Prostate gland (tissue), 2 donors: ENCODE measurements at regions of chr18 and their contacts with region 1.

Region 1: GRCh38 chr18:13289481-13290205 is 71.1 kb downstream of the LDLRAD4 start:
- DNase-seq: no peak
- H3K4me3 ChIP-seq: no peak overlapping the region
- H3K27ac ChIP-seq: no peak overlapping the region
- H3K4me1 ChIP-seq: peaks cover 6% of the 10 kb centered on the region
- H3K27me3 ChIP-seq: no peaks in the 10 kb centered on the region
- CTCF ChIP-seq: no peak
- POLR2A ChIP-seq: no peak

Region 2: DNA sequence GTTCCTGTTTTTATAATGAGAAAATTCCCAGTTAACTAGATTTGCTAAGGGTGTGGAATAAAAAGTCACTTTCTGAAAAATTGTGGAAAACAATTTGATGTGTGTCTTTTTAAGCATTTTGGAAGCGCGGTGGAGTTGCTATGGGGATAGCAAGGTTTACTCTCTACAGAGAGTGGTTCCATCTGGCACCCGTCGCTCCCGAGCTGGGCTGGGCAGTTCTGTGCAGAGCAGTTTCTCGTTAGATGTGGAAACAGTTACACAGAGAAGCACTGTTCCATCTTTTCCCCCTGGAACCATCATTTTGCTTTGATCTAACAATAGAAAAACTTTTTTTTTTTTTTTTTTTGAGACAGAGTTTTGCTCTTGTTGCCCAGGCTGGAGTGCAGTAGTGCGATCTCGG is 53.7 kb before region 1 on chr18:
- intact Hi-C with region 1: loop called (anchors 10 kb)
- DNase-seq: no peak
- H3K4me3 ChIP-seq: no peak overlapping the region
- H3K27ac ChIP-seq: no peak overlapping the region
- H3K4me1 ChIP-seq: no peaks in the 10 kb centered on the region
- H3K27me3 ChIP-seq: no peaks in the 10 kb centered on the region
- CTCF ChIP-seq: no peak
- POLR2A ChIP-seq: no peak

Region 3: DNA sequence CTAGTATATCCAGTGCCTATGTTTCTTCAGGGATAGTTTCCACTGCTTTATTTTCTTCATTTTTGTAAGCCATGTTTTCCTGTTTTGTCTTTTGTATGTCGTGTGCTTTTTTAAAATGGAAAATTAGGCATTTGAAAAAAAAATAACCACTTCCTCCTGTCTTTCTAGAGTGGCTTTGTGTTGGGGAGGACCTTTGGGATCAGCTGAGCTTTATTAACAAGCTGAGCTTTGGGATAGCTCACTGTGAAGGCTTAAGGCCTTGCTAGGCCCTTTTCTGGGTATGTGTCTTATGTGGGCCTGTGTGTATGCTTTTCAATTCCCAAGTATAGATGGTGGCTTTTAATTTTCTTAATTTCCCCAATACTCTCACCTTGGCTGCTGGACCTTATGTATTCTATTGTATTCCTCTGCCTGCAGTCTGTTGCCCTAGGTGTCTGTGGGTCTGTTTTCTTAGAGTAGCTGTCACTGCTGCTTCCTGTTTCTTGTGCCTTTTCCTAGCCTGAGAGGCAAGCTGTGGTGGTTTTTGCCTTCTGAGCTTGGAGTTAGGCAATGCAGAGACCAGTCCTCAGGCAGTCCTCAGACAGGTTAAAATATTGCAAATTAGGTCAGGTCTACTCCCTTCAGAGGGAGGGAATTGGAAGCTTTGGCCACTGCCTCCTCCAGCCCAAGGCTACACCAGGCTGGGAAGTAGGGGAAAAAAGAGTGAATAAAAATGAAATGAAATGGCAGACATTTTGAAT is 63.6 kb after region 1 on chr18:
- intact Hi-C with region 1: no loop called
- DNase-seq: no peak
- H3K4me3 ChIP-seq: no peak overlapping the region
- H3K27ac ChIP-seq: no peak overlapping the region
- H3K4me1 ChIP-seq: no peaks in the 10 kb centered on the region
- H3K27me3 ChIP-seq: no peaks in the 10 kb centered on the region
- CTCF ChIP-seq: no peak
- POLR2A ChIP-seq: no peak

Region 4: GRCh38 chr18:13424363-13424762 is 134.7 kb after region 1 on chr18:
- intact Hi-C with region 1: no loop called
- DNase-seq: no peak
- H3K4me3 ChIP-seq: no peak overlapping the region
- H3K27ac ChIP-seq: no peak overlapping the region
- H3K4me1 ChIP-seq: no peaks in the 10 kb centered on the region
- H3K27me3 ChIP-seq: no peaks in the 10 kb centered on the region
- CTCF ChIP-seq: no peak
- POLR2A ChIP-seq: no peak

Region 5: GRCh38 chr18:13435596-13436327 is 146.1 kb after region 1 on chr18:
- intact Hi-C with region 1: loop called (anchors 10 kb)
- DNase-seq: no peak
- H3K4me3 ChIP-seq: no peak overlapping the region
- H3K27ac ChIP-seq: peak overlapping the region in 1 of 2 donors; percentile 43
- H3K4me1 ChIP-seq: no peaks in the 10 kb centered on the region
- H3K27me3 ChIP-seq: no peaks in the 10 kb centered on the region
- CTCF ChIP-seq: no peak
- POLR2A ChIP-seq: no peak